ENCODE measurements at regions of chr3 and their contacts with region 1.

Region 1: GRCh38 chr3:122890077-122890719 is 95.3 kb downstream of the SLC49A4 start:
- DNase-seq: peak; percentile 66 to 74
- H3K4me3 ChIP-seq: no peak overlapping the region
- H3K27ac ChIP-seq: no peak overlapping the region
- H3K4me1 ChIP-seq: peaks cover 40% of the 10 kb centered on the region
- H3K27me3 ChIP-seq: no peaks in the 10 kb centered on the region
- CTCF ChIP-seq: no peak

Region 2: DNA sequence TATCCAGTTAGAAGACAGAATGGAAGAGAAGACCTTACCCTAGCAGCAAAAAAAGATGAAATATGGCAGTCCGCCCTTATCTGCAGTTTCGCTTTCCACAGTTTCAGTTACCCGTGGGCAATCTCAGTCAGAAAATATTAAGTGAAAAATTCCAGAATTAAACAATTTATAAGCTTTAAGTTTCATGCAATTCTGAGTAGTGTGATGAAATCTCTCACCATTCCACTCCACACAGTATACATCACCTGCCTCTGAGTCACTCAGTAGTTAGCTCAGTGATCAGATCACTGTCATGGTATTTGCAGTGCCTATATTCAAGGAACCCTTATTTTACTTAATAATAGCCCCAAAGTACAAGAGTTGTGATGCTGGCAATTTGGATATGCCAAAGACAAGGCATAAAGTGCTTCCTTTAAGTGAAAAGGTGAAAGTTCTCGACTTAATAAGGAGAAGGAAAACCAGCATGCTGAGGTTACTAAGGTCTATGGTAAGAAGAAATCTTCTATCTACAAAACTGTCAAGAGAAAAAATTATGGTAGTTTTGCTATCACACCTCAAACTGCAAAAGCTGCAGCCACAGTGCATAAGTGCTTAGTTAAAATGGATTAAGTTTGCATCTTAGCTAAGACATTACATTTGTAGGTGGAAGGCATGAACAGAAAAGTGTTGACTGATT is 144.7 kb before region 1 on chr3:
- CTCF ChIA-PET with region 1: no interaction called
- POLR2A ChIA-PET with region 1: interaction called, 15 read pairs
- intact Hi-C with region 1: no loop called
- DNase-seq: peak in 1 of 2 experiments; percentile 42
- H3K4me3 ChIP-seq: no peak overlapping the region
- H3K27ac ChIP-seq: peak overlapping the region; percentile 65
- H3K4me1 ChIP-seq: peaks cover 10% of the 10 kb centered on the region
- H3K27me3 ChIP-seq: no peaks in the 10 kb centered on the region
- CTCF ChIP-seq: no peak

Region 3: GRCh38 chr3:122793568-122794416 is 96.4 kb before region 1 on chr3 and contains the start of gene HSPBAP1:
- CTCF ChIA-PET with region 1: no interaction called
- POLR2A ChIA-PET with region 1: no interaction called
- intact Hi-C with region 1: loop called (anchors 5 kb)
- DNase-seq: peak; percentile 88 to 91
- H3K4me3 ChIP-seq: peak within 1 kb of the TSS; percentile 80
- H3K27ac ChIP-seq: peak within 1 kb of the TSS; percentile 92
- H3K4me1 ChIP-seq: peaks cover 28% of the 10 kb centered on the region
- H3K27me3 ChIP-seq: no peaks in the 10 kb centered on the region
- CTCF ChIP-seq: no peak
- total RNA-seq, gene HSPBAP1: 8.9 and 10.9 TPM in 2 replicates

Region 4: GRCh38 chr3:123201566-123202427 is 311.6 kb after region 1 on chr3 and contains the start of gene SEC22A:
- CTCF ChIA-PET with region 1: no interaction called
- POLR2A ChIA-PET with region 1: no interaction called
- intact Hi-C with region 1: loop called (anchors 5 kb)
- DNase-seq: peak; percentile 91 to 98
- H3K4me3 ChIP-seq: peak within 1 kb of the TSS; percentile 74
- H3K27ac ChIP-seq: peak within 1 kb of the TSS; percentile 50
- H3K4me1 ChIP-seq: peaks cover 13% of the 10 kb centered on the region
- H3K27me3 ChIP-seq: no peaks in the 10 kb centered on the region
- CTCF ChIP-seq: no peak
- total RNA-seq, gene SEC22A: 13.2 and 20.2 TPM in 2 replicates

Region 5: DNA sequence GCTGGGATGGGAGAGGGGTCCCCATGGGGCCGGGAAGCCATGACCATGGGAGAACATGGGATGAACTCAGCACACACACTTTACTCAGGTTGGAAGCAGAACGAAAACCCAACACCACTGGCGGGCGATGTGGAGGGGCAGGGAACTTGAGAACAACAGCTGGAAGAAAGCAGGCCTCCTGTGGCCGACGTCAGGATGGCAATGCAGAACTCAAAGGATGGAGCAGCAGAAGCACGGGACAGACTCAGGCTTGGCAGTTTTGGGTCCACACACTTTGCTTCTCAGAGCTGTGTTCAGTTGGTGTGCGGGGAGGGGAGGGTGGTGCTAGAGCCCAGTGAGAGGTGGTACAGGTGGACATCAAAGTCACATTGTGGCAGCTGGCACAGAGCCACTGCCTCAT is 392.3 kb after region 1 on chr3:
- CTCF ChIA-PET with region 1: no interaction called
- POLR2A ChIA-PET with region 1: no interaction called
- intact Hi-C with region 1: no loop called
- DNase-seq: no peak
- H3K4me3 ChIP-seq: no peak overlapping the region
- H3K27ac ChIP-seq: no peak overlapping the region
- H3K4me1 ChIP-seq: peaks cover 8% of the 10 kb centered on the region; the same call in 1 of the 2 replicates
- H3K27me3 ChIP-seq: no peaks in the 10 kb centered on the region
- CTCF ChIP-seq: no peak

Measured in PC-9 (cell line).